Panc1 (cell line): ENCODE measurements at regions of chr19 and their contacts with region 1.

Region 1: DNA sequence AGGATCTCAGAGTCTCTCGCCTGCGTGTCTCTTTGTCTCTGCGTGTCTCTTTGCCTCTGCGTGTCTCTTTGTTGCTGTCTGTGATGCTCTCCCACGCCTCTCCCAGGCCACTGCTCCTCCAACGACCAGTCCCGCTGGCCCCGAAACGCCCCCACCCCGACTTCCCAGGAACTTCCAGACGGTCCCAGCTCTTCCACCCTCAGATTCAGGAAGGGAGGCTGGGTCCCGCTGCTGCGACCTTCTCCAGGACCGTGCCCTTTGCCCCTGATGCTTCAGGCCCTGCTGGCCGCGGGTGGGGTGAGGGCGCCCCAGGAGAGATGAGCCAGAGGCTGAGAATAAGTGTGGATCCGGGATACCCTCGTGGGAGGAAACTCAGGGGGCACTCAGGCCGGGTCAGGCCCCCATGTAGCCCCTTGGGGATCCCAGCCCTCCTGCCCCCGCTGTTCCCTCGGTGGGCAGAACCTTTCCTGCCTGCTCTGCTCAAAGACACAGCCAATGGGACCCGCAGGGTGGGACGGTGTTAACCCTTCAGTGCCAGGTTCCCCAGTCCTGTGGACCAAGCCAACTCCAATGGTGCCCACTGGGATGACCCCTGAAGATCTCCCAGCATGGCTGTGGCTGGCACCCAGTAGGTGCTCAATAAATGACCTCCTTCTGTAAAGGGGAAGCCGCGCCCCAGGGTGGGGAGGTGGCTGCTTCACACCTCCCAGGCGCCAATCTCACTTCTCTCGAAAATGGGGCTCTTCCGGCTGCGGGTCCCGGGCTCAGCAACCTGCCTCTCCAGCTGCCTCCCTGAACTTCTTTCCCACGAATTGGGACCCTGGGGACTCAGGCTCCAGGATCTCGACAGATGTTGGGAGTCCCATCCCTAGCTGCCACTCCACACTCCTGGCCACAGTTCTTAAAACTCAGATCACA is 1.5 kb upstream of the S1PR5 start:
- DNase-seq: no peak
- ATAC-seq: peak; percentile 20; the same call in 1 of the 2 replicates
- H3K4me3 ChIP-seq: peak overlapping the region; percentile 59 to 76; a peak in 3 of 4 replicates
- H3K27ac ChIP-seq: peak overlapping the region; percentile 44; the same call in 1 of the 2 replicates
- H3K4me1 ChIP-seq: peaks cover 13% of the 10 kb centered on the region
- H3K27me3 ChIP-seq: no peaks in the 10 kb centered on the region
- CTCF ChIP-seq: no peak

Region 2: DNA sequence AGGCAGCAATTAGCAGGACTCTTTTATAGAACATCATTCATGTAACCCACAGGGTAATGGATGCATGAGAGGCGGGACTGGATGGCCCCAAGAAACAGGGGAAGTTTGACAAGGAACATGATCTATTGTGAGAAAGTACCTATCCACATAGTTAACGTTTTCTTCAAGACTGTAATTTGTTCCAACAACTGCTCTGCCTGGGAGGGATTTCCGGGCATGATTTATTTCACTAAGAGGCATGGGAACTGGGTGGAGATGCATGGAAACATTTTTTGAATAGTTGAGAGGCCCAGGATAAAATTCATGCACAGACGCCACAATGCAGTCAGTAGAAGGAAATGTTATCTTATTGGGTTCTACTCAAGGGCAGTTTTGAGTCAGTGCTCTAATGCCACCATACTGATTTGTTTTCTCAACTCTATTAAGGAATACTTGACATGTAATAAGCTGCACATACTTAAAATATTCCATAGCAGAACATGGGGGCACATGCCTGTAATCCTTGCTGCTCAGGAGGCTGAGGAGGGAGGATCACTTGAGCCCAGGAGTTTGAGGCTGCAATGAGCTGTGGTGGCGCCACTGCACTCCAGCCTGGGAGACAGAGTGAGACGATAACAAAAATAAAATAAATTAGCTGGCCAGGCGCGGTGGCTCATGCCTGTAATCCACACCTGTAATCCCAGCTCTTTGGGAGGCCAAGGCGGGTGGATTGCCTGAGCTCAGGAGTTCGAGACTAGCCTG is 15.1 kb after region 1 on chr19:
- CTCF ChIA-PET with region 1: no interaction called
- POLR2A ChIA-PET with region 1: interaction called, 14 read pairs
- in situ Hi-C with region 1: no loop called
- intact Hi-C with region 1: no loop called
- DNase-seq: no peak
- ATAC-seq: no peak
- H3K4me3 ChIP-seq: no peak overlapping the region
- H3K27ac ChIP-seq: no peak overlapping the region
- H3K4me1 ChIP-seq: no peaks in the 10 kb centered on the region
- H3K27me3 ChIP-seq: no peaks in the 10 kb centered on the region
- CTCF ChIP-seq: no peak